Kidney (tissue), 22 donors: ENCODE measurements at regions of chr5 and their contacts with region 1.

Region 1: GRCh38 chr5:133868946-133869518 is 99.4 kb downstream of the C5orf15 start:
- DNase-seq: peak; percentile 74 to 87 (median 85)
- H3K4me3 ChIP-seq: peak overlapping the region in 1 of 3 donors; percentile 7
- H3K27ac ChIP-seq: no peak overlapping the region
- H3K4me1 ChIP-seq: peaks cover 0 to 14% (median 12%) of the 10 kb centered on the region in 3 donors
- H3K27me3 ChIP-seq: peaks cover 4% of the 10 kb centered on the region
- CTCF ChIP-seq: peak; percentile 82

Region 2: DNA sequence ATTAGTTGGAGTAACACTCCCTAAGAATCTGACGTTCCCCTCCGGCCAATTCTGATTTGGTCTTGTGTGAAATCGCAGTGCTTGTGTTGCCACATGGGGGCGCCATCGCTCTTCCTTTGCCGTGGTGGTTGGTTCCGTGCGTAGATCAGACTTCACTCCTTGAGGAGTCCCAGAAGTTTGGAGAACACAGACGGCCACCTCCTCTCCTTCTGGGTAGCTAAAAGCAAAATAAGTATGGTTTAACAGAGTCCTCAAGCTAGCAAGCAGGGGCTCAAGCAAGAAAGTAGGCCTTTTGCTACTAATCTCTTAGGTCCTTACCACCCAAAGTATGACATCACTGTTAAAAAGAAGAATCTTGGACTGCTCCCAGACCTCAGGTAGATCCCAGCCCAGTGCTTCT is 757.7 kb before region 1 on chr5:
- intact Hi-C with region 1: loop called (anchors 5 kb)
- DNase-seq: peak; percentile 88 to 93 (median 90)
- H3K4me3 ChIP-seq: no peak overlapping the region
- H3K27ac ChIP-seq: no peak overlapping the region
- H3K4me1 ChIP-seq: no peaks in the 10 kb centered on the region
- H3K27me3 ChIP-seq: no peaks in the 10 kb centered on the region
- CTCF ChIP-seq: peak; percentile 89